Activated CD4-positive, alpha-beta memory T cell treated with anti-CD3 and anti-CD28 coated beads for 36 hours (primary cell): ENCODE measurements at regions of chr17 and their contacts with region 1.

Region 1: DNA sequence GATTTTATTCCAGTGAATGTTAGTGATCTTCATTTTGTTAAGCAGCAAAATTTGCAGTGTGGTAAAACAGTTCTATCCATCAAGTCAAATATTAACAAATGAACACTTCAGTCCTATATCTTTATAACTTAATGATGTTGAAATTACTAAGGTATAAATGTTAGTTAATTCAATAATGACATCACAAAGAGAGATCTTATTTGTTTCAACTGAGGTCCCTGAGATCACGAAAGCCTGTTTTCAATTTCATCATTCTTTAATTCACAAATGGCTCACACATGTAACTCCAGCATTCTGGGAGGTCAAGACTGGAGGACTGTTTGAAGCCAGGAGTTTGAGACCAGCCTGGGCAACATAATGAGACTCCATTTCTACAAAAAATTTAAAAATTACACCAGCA is 13.9 kb downstream of the SMURF2 start:
- DNase-seq: no peak
- H3K4me3 Mint-ChIP-seq: no peak overlapping the region
- H3K27ac Mint-ChIP-seq: no peak overlapping the region
- H3K4me1 Mint-ChIP-seq: peaks cover 28% of the 10 kb centered on the region
- H3K27me3 Mint-ChIP-seq: no peaks in the 10 kb centered on the region

Region 2: GRCh38 chr17:64491034-64491859 is 157.0 kb before region 1 on chr17:
- CTCF ChIA-PET with region 1: interaction called, 22 read pairs
- POLR2A ChIA-PET with region 1: interaction called, 4 read pairs
- intact Hi-C with region 1: loop called (anchors 2 kb)
- DNase-seq: peak; percentile 70
- H3K4me3 Mint-ChIP-seq: no peak overlapping the region
- H3K27ac Mint-ChIP-seq: no peak overlapping the region
- H3K4me1 Mint-ChIP-seq: peaks cover 34% of the 10 kb centered on the region
- H3K27me3 Mint-ChIP-seq: no peaks in the 10 kb centered on the region

Region 3: DNA sequence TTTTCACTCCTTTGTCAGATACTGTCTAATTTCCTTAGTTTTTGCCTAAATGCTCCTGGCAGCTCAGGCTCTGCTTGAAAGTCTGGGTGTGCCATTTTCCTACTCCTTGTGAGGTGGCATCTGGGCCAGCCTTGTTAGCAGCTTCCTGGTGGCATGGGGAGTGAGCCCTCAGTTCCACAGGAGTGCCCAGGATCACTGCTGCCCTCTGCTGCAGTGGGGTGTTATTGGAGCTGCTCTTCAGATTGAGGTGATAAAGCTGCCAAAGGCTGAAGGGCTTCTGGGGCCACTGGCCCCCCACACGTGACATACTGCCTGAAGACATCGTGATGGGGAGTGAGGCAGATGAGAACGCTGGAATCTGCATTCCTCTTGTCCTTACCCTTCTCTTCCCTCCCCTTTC is 114.1 kb before region 1 on chr17:
- CTCF ChIA-PET with region 1: interaction called, 17 read pairs
- POLR2A ChIA-PET with region 1: no interaction called
- intact Hi-C with region 1: loop called (anchors 5 kb)
- DNase-seq: peak; percentile 10
- H3K4me3 Mint-ChIP-seq: no peak overlapping the region
- H3K27ac Mint-ChIP-seq: peak overlapping the region; percentile 56
- H3K4me1 Mint-ChIP-seq: no peaks in the 10 kb centered on the region
- H3K27me3 Mint-ChIP-seq: no peaks in the 10 kb centered on the region

Region 4: DNA sequence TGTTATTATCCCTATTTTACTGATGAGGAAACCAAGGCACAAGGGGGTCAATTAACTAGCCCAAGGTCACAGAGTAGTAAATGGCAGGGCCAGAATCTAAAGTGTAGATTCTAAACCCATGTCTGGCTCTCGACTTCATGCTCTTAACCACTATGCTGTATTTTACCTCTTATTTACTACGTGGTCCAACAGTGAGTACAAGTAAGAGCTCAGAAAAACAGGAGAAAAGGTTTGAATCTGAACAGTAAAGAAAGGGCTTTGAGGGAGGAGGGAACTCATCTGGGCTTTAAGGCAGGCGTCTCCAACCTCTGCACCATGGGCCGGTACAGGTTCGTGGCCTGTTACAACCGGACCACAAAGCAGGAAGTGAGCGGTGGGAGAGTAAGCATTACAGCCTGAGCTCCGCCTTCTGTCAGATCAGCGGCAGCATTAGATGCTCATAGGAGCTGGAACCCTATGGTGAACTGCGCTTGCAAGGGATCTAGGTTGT is 49.0 kb before region 1 on chr17:
- CTCF ChIA-PET with region 1: interaction called, 10 read pairs
- POLR2A ChIA-PET with region 1: no interaction called
- intact Hi-C with region 1: no loop called
- DNase-seq: peak; percentile 78
- H3K4me3 Mint-ChIP-seq: peak overlapping the region; percentile 61
- H3K27ac Mint-ChIP-seq: peak overlapping the region; percentile 74
- H3K4me1 Mint-ChIP-seq: peaks cover 26% of the 10 kb centered on the region
- H3K27me3 Mint-ChIP-seq: no peaks in the 10 kb centered on the region